ENCODE measurements at regions of chr17 and their contacts with region 1.

Region 1: GRCh38 chr17:74972107-74972972 is at the start of gene HID1:
- DNase-seq: peak; percentile 74 to 90 (median 81)
- ATAC-seq: peak; percentile 88
- H3K4me3 ChIP-seq: peak within 1 kb of the TSS; percentile 59
- H3K4me3 Mint-ChIP-seq: peak within 1 kb of the TSS; percentile 89
- H3K27ac ChIP-seq: no peak within 1 kb of the TSS
- H3K27ac Mint-ChIP-seq: peak within 1 kb of the TSS; percentile 55
- H3K4me1 ChIP-seq: peaks cover 21% of the 10 kb centered on the region
- H3K4me1 Mint-ChIP-seq: peaks cover 5% of the 10 kb centered on the region
- H3K27me3 ChIP-seq: peaks cover 4 to 14% of the 10 kb centered on the region in 2 experiments
- H3K27me3 Mint-ChIP-seq: peaks cover 4% of the 10 kb centered on the region
- CTCF ChIP-seq: no peak
- total RNA-seq, gene HID1: 31.8 to 31.9 TPM

Region 2: DNA sequence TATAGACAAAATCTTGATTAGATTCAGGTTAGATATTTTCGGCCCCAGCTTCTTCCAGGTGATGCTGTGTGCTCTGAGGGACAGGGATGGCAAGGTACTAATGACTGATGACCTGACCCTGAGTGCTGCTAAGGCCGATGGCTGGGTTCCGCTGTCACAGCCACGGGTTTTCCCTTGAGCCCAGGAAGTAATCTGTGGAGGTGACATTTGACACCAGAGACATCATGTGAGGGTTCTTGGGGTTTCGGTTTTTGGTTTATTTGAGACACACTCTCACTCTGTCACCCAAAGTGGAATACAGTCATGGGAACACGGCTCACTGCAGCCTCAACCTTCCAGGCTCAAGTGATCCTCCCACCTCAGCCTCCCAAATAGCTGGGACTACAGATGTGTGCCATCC is 26.8 kb before region 1 on chr17:
- CTCF ChIA-PET with region 1: no interaction called
- POLR2A ChIA-PET with region 1: no interaction called
- intact Hi-C with region 1: no loop called
- DNase-seq: no peak
- ATAC-seq: no peak
- H3K4me3 ChIP-seq: no peak overlapping the region
- H3K4me3 Mint-ChIP-seq: no peak overlapping the region
- H3K27ac ChIP-seq: no peak overlapping the region
- H3K27ac Mint-ChIP-seq: no peak overlapping the region
- H3K4me1 ChIP-seq: no peaks in the 10 kb centered on the region
- H3K4me1 Mint-ChIP-seq: no peaks in the 10 kb centered on the region
- H3K27me3 ChIP-seq: peaks cover 0 to 2% of the 10 kb centered on the region in 2 experiments
- H3K27me3 Mint-ChIP-seq: peaks cover 30% of the 10 kb centered on the region
- CTCF ChIP-seq: no peak

Region 3: DNA sequence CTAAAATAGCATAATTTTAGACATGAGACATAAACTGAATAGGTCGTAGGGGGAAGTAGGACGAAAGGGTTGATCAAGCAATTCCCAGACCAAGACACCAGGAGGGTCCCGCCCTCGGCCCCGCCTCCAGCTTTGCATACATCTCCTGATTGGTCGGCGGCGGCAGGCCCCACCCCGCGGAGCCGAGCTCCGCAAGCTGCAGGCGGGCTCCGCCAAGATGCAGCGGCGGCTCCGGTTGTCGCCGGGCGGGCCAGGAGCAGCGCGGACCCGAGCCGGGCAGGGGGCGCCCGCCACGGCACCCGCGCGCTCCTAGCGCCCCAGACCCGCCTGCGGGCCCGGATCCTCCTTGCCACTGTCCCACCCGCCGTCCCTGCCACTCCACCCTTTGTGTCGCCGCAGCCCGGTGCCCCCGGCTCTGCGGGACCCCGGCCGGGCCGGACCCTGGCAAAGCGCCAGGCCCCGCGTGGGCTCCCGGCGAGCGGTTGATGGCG is 15.1 kb after region 1 on chr17 and contains the start of gene CDR2L:
- CTCF ChIA-PET with region 1: interaction called, 8 read pairs
- POLR2A ChIA-PET with region 1: interaction called, 10 read pairs
- intact Hi-C with region 1: loop called in 1 of 2 experiments (anchors 1 kb)
- DNase-seq: peak; percentile 80 to 97 (median 90)
- ATAC-seq: peak; percentile 97
- H3K4me3 ChIP-seq: peak within 1 kb of the TSS; percentile 55
- H3K4me3 Mint-ChIP-seq: peak within 1 kb of the TSS; percentile 85
- H3K27ac ChIP-seq: no peak within 1 kb of the TSS
- H3K27ac Mint-ChIP-seq: peak within 1 kb of the TSS; percentile 19
- H3K4me1 ChIP-seq: peaks cover 21% of the 10 kb centered on the region
- H3K4me1 Mint-ChIP-seq: peaks cover 15% of the 10 kb centered on the region
- H3K27me3 ChIP-seq: peaks cover 7 to 9% of the 10 kb centered on the region in 2 experiments
- H3K27me3 Mint-ChIP-seq: peaks cover 4% of the 10 kb centered on the region
- CTCF ChIP-seq: no peak
- total RNA-seq, gene CDR2L: 0.08 TPM in 1 of 2 experiments, not detected in the other

Region 4: DNA sequence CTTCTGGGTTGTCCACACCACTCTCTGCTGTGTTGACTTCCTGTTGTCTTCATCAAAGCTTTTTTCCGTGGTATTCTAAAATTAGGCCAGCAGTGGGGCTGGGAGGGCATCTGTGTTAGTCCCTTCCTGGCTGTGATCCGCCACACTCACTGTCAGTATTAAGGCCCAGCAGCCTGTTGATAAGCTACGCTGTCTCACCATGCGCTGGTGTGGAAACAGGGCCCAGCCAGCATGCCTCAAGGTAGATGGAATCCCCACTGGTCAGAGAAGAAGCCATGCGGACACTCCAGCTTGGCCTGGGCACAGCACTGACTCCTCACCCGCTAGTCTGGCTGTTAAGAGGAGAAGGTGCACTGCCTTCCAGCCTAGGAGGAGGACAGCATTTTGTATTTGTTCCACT is 26.4 kb after region 1 on chr17:
- CTCF ChIA-PET with region 1: no interaction called
- POLR2A ChIA-PET with region 1: no interaction called
- intact Hi-C with region 1: no loop called
- DNase-seq: no peak
- ATAC-seq: no peak
- H3K4me3 ChIP-seq: no peak overlapping the region
- H3K4me3 Mint-ChIP-seq: no peak overlapping the region
- H3K27ac ChIP-seq: no peak overlapping the region
- H3K27ac Mint-ChIP-seq: no peak overlapping the region
- H3K4me1 ChIP-seq: no peaks in the 10 kb centered on the region
- H3K4me1 Mint-ChIP-seq: no peaks in the 10 kb centered on the region
- H3K27me3 ChIP-seq: no peaks in the 10 kb centered on the region
- H3K27me3 Mint-ChIP-seq: no peaks in the 10 kb centered on the region
- CTCF ChIP-seq: no peak

Measured in CD4-positive, alpha-beta T cell (primary cell).